Ascending aorta (tissue), 2 donors: ENCODE measurements at regions of chr1 and their contacts with region 1.

Region 1: DNA sequence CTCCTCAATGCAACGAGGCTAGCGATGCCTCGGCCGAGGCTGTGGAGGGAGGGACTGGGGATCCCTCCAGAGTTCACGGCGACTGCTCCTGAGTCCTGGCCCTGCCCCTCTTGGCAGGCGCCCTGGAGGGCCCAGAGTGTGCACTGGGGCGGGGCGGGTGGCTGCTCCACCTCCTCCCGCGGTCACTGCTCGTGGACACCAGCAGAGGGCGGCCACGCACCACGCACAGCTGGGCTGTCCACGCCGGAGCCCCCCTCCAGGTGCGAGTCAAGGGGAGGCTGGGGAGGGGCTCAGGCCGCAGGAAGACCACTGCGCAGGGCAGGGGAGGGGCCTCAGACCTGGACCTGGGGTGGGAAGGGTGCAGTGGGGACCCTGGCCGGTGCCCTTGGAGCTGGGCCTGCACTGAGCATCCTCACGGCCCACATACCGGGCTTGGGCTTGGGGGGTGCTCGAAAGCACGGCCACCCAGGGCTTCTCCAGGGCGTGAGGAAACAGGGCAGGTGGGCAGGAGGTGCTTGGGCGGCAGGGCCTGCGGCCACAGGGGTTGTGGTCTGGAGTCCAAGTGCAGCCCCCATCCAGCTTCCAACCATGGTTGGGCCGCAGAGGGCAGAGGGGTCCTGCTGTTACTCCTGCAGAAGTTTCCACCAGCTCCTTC is 20.6 kb upstream of the TTC34 start:
- DNase-seq: no peak
- H3K4me3 ChIP-seq: no peak overlapping the region
- H3K27ac ChIP-seq: no peak overlapping the region
- H3K4me1 ChIP-seq: peaks cover 0 to 5% of the 10 kb centered on the region in 2 donors
- H3K27me3 ChIP-seq: no peaks in the 10 kb centered on the region
- CTCF ChIP-seq: peak; percentile 58 to 91 (median 80)

Region 2: DNA sequence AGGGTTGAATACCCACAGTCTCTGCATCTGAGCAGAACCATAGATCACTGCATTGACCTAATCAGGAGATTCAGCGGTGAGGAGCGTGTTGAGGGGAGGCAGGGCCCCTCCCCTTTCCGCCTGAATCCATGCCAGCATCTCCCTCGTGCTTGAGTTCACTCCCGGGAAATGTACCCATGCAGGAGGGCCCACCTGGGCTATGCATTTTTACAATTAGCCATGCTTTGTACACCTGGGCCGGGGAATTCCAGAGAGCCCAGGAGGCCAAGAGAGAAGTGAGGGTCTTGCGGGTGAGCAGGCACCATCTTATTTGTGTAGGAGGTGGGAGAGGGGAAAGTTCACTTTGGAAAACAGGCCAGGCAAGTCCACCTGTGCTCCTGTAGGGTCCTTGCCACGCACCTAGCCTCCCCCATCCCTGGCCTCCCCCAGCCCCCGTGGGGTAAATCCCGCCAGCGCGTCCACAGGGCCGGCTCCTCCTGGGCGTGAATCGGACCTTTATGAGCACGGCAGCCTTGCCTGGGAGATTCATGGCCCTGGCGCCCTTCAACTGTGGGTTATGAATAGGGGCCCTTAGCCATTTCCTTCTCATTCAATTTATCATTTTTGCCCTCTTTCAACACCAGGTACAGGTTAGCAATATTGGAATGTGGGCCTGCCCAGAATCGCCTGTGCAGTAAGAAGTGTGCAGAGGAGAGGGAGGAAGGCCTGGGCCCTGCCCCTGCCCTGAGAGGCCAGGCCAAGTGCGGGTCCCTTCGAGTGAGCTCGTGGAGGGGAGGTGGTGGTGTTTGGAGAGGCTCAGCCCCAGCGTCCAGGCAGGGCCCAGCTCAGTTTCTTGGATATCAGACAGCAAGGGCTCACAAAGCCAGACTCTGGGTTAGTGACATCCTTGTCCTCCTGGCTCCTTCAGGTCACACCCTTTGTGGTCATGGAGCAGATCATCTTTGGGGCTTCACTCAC is 114.7 kb after region 1 on chr1:
- intact Hi-C with region 1: no loop called
- DNase-seq: no peak
- H3K4me3 ChIP-seq: no peak overlapping the region
- H3K27ac ChIP-seq: no peak overlapping the region
- H3K4me1 ChIP-seq: no peaks in the 10 kb centered on the region
- H3K27me3 ChIP-seq: no peaks in the 10 kb centered on the region
- CTCF ChIP-seq: no peak

Region 3: DNA sequence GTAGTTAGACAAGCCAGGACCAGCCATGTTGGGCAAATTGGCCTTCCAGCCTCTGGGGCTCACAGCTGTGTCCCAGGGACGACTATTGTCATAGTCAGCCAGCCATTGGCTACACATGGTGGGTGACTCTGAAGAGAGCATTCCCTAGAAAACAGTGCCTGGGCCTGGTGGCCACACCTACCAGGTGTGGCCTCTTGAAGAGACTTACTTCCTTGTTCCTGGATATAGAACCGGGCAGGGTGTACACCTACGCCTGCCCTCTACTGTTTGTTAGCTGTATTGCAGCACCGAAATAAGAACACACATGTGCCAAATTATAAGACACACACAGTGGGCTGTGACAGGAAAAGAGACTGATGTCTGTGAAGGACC is 497.8 kb after region 1 on chr1:
- intact Hi-C with region 1: loop called (anchors 5 kb)
- DNase-seq: no peak
- H3K4me3 ChIP-seq: no peak overlapping the region
- H3K27ac ChIP-seq: peak overlapping the region; percentile 15 to 51
- H3K4me1 ChIP-seq: peaks cover 10 to 63% of the 10 kb centered on the region in 2 donors
- H3K27me3 ChIP-seq: no peaks in the 10 kb centered on the region
- CTCF ChIP-seq: peak; percentile 57 to 75 (median 74)

Region 4: DNA sequence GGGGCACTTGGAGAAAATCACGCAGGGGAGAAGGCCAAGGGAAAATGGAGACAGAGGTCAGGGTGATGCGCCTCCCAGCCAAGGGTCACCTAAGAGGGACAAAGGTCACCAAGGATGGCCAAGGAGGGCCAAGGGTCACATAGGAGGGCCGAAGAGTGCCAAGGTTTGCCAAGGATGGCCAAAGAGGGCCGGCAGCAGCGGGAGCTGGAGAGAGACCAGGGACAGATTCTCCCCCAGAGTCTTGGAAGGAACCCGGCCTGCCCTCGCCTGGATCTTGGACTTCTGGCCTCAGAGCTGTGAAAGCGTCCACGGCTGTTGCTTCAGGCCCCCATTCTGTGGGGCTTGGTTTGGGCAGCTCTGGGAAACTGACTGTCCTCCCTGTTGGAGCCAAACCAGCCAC is 606.8 kb after region 1 on chr1:
- intact Hi-C with region 1: loop called (anchors 5 kb)
- DNase-seq: no peak
- H3K4me3 ChIP-seq: no peak overlapping the region
- H3K27ac ChIP-seq: no peak overlapping the region
- H3K4me1 ChIP-seq: peaks cover 0 to 9% of the 10 kb centered on the region in 2 donors
- H3K27me3 ChIP-seq: no peaks in the 10 kb centered on the region
- CTCF ChIP-seq: no peak